Transverse colon (tissue), 4 donors: ENCODE measurements at regions of chr10 and their contacts with region 1.

Region 1: GRCh38 chr10:22277705-22278104 is 38.5 kb upstream of the COMMD3 start:
- DNase-seq: no peak
- H3K4me3 ChIP-seq: peak overlapping the region in 3 of 4 donors; percentile 15 to 18 (median 17)
- H3K27ac ChIP-seq: peak overlapping the region in 1 of 4 donors; percentile 10
- H3K4me1 ChIP-seq: no peaks in the 10 kb centered on the region
- H3K27me3 ChIP-seq: no peaks in the 10 kb centered on the region
- CTCF ChIP-seq: no peak
- EP300 ChIP-seq: no peak
- POLR2A ChIP-seq: no peak

Region 2: GRCh38 chr10:22183771-22184461 is 93.8 kb before region 1 on chr10:
- in situ Hi-C with region 1: no loop called
- intact Hi-C with region 1: loop called (anchors 5 kb)
- DNase-seq: no peak
- H3K4me3 ChIP-seq: no peak overlapping the region
- H3K27ac ChIP-seq: no peak overlapping the region
- H3K4me1 ChIP-seq: no peaks in the 10 kb centered on the region
- H3K27me3 ChIP-seq: no peaks in the 10 kb centered on the region
- CTCF ChIP-seq: no peak
- EP300 ChIP-seq: no peak
- POLR2A ChIP-seq: no peak